A673 (cell line): ENCODE measurements at regions of chr9 and their contacts with region 1.

Region 1: DNA sequence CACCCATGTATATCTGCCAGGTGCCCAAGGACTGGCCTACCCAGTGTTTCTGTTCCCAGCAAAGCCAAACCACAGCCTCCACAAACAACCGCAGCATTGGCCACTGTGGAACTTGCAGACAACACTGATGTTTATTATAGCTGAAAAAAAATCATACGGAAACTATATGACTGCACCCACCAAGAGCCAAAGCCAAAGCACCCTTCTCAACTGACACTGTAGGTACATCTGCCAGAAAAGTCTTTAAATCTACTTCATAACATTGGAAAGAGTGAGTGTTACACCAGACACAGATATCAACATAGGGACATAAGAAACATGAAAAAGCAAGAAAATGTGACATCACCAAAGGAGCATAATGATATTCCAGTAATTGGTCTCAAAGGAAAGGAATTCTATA is 428.0 kb downstream of the PSAT1 start:
- DNase-seq: no peak
- H3K4me3 ChIP-seq: no peak overlapping the region
- H3K27ac ChIP-seq: no peak overlapping the region
- H3K4me1 ChIP-seq: no peaks in the 10 kb centered on the region
- H3K27me3 ChIP-seq: no peaks in the 10 kb centered on the region
- CTCF ChIP-seq: no peak

Region 2: GRCh38 chr9:78676623-78677022 is 48.3 kb before region 1 on chr9:
- CTCF ChIA-PET with region 1: no interaction called
- POLR2A ChIA-PET with region 1: no interaction called
- intact Hi-C with region 1: loop called (anchors 5 kb)
- DNase-seq: no peak
- H3K4me3 ChIP-seq: no peak overlapping the region
- H3K27ac ChIP-seq: no peak overlapping the region
- H3K4me1 ChIP-seq: no peaks in the 10 kb centered on the region
- H3K27me3 ChIP-seq: peaks cover 27% of the 10 kb centered on the region
- CTCF ChIP-seq: no peak